H1 (cell line): ENCODE measurements at regions of chr10 and their contacts with region 1.

Region 1: GRCh38 chr10:127906548-127907377 is at the start of gene PTPRE:
- DNase-seq: peak; percentile 17 to 88
- H3K4me3 ChIP-seq: peak within 1 kb of the TSS; percentile 36 to 87 (median 54)
- H3K27ac ChIP-seq: no peak within 1 kb of the TSS
- H3K4me1 ChIP-seq: peaks cover 0 to 3% (median 1%) of the 10 kb centered on the region in 4 experiments; a peak in 5 of 7 replicates
- H3K27me3 ChIP-seq: peaks cover 3 to 23% (median 15%) of the 10 kb centered on the region in 4 experiments
- CTCF ChIP-seq: peak; percentile 72 to 94 (median 88)
- EP300 ChIP-seq: no peak
- POLR2A ChIP-seq: no peak
- RAD21 ChIP-seq: peak; percentile 67 to 91
- total RNA-seq, gene PTPRE: 0.54 and 0.69 TPM in 2 replicates

Region 2: DNA sequence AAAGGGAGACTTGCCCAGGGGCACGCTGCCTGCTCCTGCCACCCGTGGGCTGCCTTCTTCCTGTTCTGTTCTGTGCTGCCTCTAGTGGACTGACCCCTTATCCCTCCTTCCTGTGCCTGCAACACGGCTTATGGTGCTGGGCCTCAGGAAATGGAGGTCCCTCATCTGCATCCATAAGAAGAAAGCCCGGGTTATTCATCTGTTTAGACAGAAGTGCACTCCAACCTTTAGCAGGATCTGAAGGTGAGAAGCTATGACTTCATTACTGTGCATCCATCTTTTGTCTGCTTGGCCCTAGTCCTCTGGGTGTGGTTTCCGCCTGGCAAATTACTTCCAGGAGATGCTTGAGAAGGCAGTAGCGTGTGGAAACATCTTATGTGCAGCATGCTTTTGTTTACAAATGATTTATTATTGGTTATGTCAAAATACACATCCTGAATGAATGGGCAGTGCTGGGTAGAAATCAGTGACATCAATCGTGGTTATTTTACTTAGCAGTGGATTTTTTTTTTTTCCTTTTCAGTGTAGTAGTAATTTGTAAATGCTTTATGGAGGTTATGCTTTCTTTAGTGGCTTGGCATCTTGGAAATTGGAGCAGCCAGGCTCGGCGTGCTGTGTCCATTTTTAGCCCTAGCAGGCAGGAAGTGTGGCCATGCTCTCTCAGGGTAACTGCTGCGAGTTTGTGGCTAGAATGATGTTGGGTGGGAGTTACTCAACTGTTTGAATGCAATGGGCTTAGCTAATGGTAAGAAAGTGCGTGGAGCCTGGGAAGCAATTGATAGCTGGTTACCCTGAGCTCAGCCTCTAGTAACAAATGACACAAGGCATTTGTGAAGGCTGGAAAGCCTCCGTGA is 12.9 kb after region 1 on chr10:
- CTCF ChIA-PET with region 1: interaction called, 11 read pairs
- POLR2A ChIA-PET with region 1: no interaction called
- DNase-seq: peak in 1 of 2 experiments; percentile 44
- H3K4me3 ChIP-seq: no peak overlapping the region
- H3K27ac ChIP-seq: no peak overlapping the region
- H3K4me1 ChIP-seq: peaks cover 0 to 2% (median 0%) of the 10 kb centered on the region in 4 experiments; a peak in 3 of 7 replicates
- H3K27me3 ChIP-seq: no peaks in the 10 kb centered on the region
- CTCF ChIP-seq: peak; percentile 43 to 65 (median 59)
- EP300 ChIP-seq: no peak
- POLR2A ChIP-seq: no peak
- RAD21 ChIP-seq: peak; percentile 4 to 24; a peak in 1 of 4 replicates

Region 3: DNA sequence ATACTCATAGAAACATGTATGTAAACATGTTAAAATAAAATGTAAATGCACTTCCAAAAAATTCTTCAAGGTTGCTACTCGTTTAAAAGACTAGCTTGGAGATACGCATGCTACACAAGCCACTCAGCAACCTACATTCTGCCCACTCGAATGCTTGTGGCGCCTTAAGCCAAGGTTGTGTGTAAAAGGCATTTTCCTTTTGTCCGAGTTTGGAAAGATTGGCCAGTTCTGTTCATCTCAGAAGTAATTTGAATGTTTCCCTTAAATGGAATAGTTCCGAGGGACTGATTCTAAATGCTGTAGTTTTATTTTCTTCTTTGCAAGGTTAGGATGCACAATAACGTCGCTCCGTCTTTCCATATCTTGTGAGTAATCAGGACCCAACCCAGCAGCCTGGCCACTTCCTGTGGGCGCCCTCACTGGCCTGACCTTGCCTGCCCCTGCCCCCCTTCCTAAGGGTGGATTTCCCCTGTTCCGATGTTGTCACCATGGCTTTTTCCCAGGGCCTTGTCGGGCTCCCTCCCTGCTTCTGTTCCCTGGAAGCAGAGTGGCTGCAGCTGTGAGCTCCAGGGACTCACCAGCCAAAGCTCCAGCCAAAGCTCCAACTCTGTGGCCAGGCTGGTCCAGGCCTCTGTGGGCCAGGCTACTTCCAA is 70.7 kb after region 1 on chr10:
- CTCF ChIA-PET with region 1: interaction called, 12 read pairs
- POLR2A ChIA-PET with region 1: no interaction called
- DNase-seq: no peak
- H3K4me3 ChIP-seq: no peak overlapping the region
- H3K27ac ChIP-seq: no peak overlapping the region
- H3K4me1 ChIP-seq: peaks cover 0 to 5% (median 0%) of the 10 kb centered on the region in 4 experiments; a peak in 3 of 7 replicates
- H3K27me3 ChIP-seq: no peaks in the 10 kb centered on the region
- CTCF ChIP-seq: no peak
- EP300 ChIP-seq: no peak
- POLR2A ChIP-seq: no peak
- RAD21 ChIP-seq: no peak

Region 4: DNA sequence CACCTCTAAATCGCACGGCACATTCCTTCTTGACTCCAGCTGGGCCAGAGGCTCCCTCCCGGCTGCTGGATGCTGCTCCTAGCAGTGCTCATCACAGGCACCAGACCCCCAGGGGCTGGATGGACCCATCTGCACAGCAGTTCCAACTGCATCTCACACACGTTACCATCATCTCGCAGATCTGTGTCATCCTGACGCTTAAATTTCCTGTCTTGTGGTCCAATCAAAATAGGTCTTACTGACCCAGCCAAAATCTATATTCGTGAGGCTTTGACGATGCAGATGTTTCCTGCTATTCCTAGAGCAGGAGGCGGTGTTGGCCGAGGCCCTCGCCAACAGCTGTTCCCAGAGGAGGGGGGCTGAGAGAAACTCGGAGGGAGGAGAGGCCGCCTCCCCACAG is 111.5 kb after region 1 on chr10:
- CTCF ChIA-PET with region 1: interaction called, 12 read pairs
- POLR2A ChIA-PET with region 1: no interaction called
- DNase-seq: no peak
- H3K4me3 ChIP-seq: no peak overlapping the region
- H3K27ac ChIP-seq: no peak overlapping the region
- H3K4me1 ChIP-seq: 0 out of 7 replicates have a peak, but pooled peaks cover 0 to 2% (median 0%) of the 10 kb centered on the region in 4 experiments
- H3K27me3 ChIP-seq: no peaks in the 10 kb centered on the region
- CTCF ChIP-seq: no peak
- EP300 ChIP-seq: no peak
- POLR2A ChIP-seq: no peak
- RAD21 ChIP-seq: no peak

Region 5: GRCh38 chr10:128047351-128047750 is 140.6 kb after region 1 on chr10:
- CTCF ChIA-PET with region 1: interaction called, 11 read pairs
- POLR2A ChIA-PET with region 1: no interaction called
- DNase-seq: peak; percentile 15 to 71
- H3K4me3 ChIP-seq: no peak overlapping the region
- H3K27ac ChIP-seq: no peak overlapping the region
- H3K4me1 ChIP-seq: peaks cover 0 to 2% (median 0%) of the 10 kb centered on the region in 4 experiments; a peak in 2 of 7 replicates
- H3K27me3 ChIP-seq: no peaks in the 10 kb centered on the region
- CTCF ChIP-seq: no peak
- EP300 ChIP-seq: no peak; a peak in 1 of 3 replicates
- POLR2A ChIP-seq: peak in 1 of 2 experiments; percentile 40; a peak in 1 of 3 replicates
- RAD21 ChIP-seq: no peak